ENCODE measurements at regions of chr4 and their contacts with region 1.

Region 1: GRCh38 chr4:140756319-140757231 is at the start of gene TBC1D9:
- DNase-seq: peak; percentile 88
- ATAC-seq: peak; percentile 62
- H3K4me3 ChIP-seq: peak within 1 kb of the TSS; percentile 66 to 99 (median 87)
- H3K4me3 Mint-ChIP-seq: peak within 1 kb of the TSS; percentile 97
- H3K27ac ChIP-seq: peak within 1 kb of the TSS; percentile 99
- H3K27ac Mint-ChIP-seq: peak within 1 kb of the TSS; percentile 98
- H3K4me1 ChIP-seq: peaks cover 45 to 56% of the 10 kb centered on the region in 2 donors
- H3K4me1 Mint-ChIP-seq: peaks cover 63% of the 10 kb centered on the region
- H3K27me3 ChIP-seq: no peaks in the 10 kb centered on the region
- H3K27me3 Mint-ChIP-seq: no peaks in the 10 kb centered on the region
- CTCF ChIP-seq: peak; percentile 1
- total RNA-seq, gene TBC1D9: 235 and 252 TPM in 2 replicates

Region 2: DNA sequence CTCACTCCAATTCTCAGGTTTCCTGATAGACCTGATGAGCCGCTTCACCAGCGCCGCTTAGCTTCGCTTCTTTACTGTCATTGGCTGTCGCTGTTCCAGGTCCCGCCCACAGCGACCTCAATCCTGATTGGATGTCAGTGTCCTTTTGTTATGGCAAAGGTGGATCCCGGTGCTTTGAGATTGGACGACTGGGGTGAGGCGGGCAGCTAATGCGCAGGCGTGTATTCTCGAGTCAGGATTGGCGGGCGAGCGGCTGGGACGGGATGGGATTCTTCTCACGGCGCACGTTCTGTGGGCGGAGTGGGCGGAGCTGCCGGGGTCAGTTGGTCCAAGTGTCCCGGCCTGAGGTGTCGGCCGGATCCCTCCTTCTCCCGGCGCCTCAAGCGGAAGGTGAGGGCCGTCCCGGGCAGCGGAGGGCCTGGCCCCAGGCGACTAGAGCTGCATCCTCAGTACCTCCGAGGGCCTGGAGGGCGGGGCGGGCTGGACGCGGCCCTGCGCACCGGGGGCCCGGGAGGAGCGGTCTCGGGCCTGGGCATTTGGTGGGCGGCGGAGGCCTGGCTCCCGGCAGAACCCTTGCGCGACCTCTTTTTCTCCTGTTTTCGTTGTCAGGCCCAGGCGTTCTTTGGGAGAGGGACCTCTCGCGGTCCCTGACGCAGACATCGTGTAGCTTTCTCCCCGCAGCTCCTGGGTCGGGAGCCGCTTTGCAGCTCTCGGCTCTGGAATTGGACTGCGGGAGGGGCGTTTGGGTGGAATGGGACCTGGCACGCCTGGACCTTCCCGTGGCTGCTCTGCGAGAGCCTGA is 383.0 kb before region 1 on chr4 and contains the start of gene SCOC:
- CTCF ChIA-PET with region 1: no interaction called
- POLR2A ChIA-PET with region 1: no interaction called
- intact Hi-C with region 1: loop called (anchors 10 kb)
- DNase-seq: peak; percentile 97
- ATAC-seq: peak; percentile 95
- H3K4me3 ChIP-seq: peak within 1 kb of the TSS; percentile 54 to 98 (median 93)
- H3K4me3 Mint-ChIP-seq: peak within 1 kb of the TSS; percentile 86
- H3K27ac ChIP-seq: peak within 1 kb of the TSS; percentile 74 to 86
- H3K27ac Mint-ChIP-seq: peak within 1 kb of the TSS; percentile 64
- H3K4me1 ChIP-seq: peaks cover 14 to 16% of the 10 kb centered on the region in 2 donors
- H3K4me1 Mint-ChIP-seq: peaks cover 25% of the 10 kb centered on the region
- H3K27me3 ChIP-seq: no peaks in the 10 kb centered on the region
- H3K27me3 Mint-ChIP-seq: no peaks in the 10 kb centered on the region
- CTCF ChIP-seq: no peak
- total RNA-seq, gene SCOC: 18.4 and 19.2 TPM in 2 replicates

Region 3: DNA sequence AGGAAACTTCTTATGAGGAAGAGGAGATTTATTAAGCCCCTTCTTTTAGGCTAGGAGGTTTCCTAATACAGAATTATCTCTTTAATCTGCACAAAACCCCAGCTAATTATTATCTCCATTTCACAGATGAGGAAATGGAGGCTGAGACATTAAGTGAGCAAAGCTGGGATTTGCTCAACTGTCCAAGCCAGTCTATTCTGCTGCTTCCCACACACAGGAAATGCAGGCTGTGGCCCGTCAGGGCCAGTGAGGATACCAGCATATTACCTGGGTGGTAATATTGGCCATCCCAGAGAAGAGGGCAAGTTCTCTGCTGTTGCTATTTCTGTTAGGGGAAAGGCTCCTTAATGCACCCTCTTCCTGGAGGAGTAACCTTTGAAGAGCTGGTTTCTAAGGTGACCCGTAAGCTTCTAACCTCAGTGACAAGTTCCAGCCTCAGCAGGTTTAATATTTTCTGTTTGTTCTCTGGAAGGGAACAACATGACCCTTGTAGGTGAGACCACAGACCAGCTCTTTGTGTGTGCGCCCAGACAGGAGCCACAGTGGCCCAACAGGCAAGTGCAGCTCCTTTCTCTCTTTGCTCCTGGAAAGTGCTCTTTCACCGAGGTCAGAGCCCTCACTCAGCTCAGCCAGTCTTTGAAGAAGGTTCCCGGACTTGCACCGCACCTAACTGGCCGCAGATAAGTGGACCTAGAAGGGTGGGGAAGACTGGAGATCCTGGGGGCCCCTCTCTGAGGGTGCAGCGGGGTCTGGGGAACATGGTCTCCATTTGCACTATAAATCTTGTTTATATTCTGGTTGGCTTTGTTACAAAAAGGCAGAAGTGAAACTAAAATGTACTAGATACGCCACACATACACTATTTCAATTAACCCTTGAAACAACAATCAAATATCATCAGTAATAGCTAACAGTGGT is 35.9 kb before region 1 on chr4:
- CTCF ChIA-PET with region 1: interaction called, 7 read pairs
- POLR2A ChIA-PET with region 1: interaction called, 20 read pairs
- intact Hi-C with region 1: loop called (anchors 1 kb)
- DNase-seq: peak; percentile 75
- ATAC-seq: peak; percentile 63
- H3K4me3 ChIP-seq: peak overlapping the region; percentile 40 to 68 (median 54)
- H3K4me3 Mint-ChIP-seq: peak overlapping the region; percentile 89
- H3K27ac ChIP-seq: peak overlapping the region; percentile 92
- H3K27ac Mint-ChIP-seq: peak overlapping the region; percentile 99
- H3K4me1 ChIP-seq: peaks cover 75 to 76% of the 10 kb centered on the region in 2 donors
- H3K4me1 Mint-ChIP-seq: peaks cover 85% of the 10 kb centered on the region
- H3K27me3 ChIP-seq: no peaks in the 10 kb centered on the region
- H3K27me3 Mint-ChIP-seq: no peaks in the 10 kb centered on the region
- CTCF ChIP-seq: no peak

Region 4: GRCh38 chr4:140790765-140791164 is 34.2 kb after region 1 on chr4:
- CTCF ChIA-PET with region 1: interaction called, 26 read pairs
- POLR2A ChIA-PET with region 1: interaction called, 29 read pairs
- intact Hi-C with region 1: loop called (anchors 1 kb)
- DNase-seq: peak; percentile 93
- ATAC-seq: peak; percentile 92
- H3K4me3 ChIP-seq: peak overlapping the region in 1 of 5 experiments; percentile 31
- H3K4me3 Mint-ChIP-seq: peak overlapping the region; percentile 67
- H3K27ac ChIP-seq: peak overlapping the region; percentile 72 to 82
- H3K27ac Mint-ChIP-seq: peak overlapping the region; percentile 88
- H3K4me1 ChIP-seq: peaks cover 63 to 67% of the 10 kb centered on the region in 2 donors
- H3K4me1 Mint-ChIP-seq: peaks cover 69% of the 10 kb centered on the region
- H3K27me3 ChIP-seq: no peaks in the 10 kb centered on the region
- H3K27me3 Mint-ChIP-seq: no peaks in the 10 kb centered on the region
- CTCF ChIP-seq: no peak

Region 5: DNA sequence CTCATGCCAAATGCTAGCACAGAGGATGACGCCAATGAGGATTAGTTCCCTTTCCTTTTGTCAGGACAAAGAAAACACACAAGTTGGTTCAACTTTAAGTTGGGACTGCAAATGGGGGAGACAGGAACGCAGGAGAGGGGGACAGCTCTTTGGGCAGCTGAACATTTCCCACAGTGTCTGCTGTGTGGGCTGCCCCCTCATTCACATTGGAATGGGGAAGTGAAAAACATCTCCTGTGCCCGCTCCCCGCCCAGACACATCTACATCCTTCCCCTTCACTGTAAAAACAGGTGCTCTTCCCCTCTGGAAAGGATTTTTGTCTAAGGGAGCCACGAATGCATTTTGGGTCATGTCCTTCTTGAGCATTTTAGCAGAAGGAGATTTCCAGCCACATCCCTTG is 44.1 kb after region 1 on chr4:
- CTCF ChIA-PET with region 1: interaction called, 30 read pairs
- POLR2A ChIA-PET with region 1: interaction called, 15 read pairs
- intact Hi-C with region 1: no loop called
- DNase-seq: peak; percentile 69
- ATAC-seq: peak; percentile 77
- H3K4me3 ChIP-seq: peak overlapping the region in 1 of 5 experiments; percentile 1
- H3K4me3 Mint-ChIP-seq: peak overlapping the region; percentile 73
- H3K27ac ChIP-seq: peak overlapping the region; percentile 52 to 60
- H3K27ac Mint-ChIP-seq: peak overlapping the region; percentile 81
- H3K4me1 ChIP-seq: peaks cover 71 to 82% of the 10 kb centered on the region in 2 donors
- H3K4me1 Mint-ChIP-seq: peaks cover 85% of the 10 kb centered on the region
- H3K27me3 ChIP-seq: no peaks in the 10 kb centered on the region
- H3K27me3 Mint-ChIP-seq: no peaks in the 10 kb centered on the region
- CTCF ChIP-seq: no peak

Region 6: GRCh38 chr4:140807491-140808252 is 51.1 kb after region 1 on chr4:
- CTCF ChIA-PET with region 1: interaction called, 30 read pairs
- POLR2A ChIA-PET with region 1: interaction called, 29 read pairs
- intact Hi-C with region 1: loop called (anchors 1 kb)
- DNase-seq: peak; percentile 80
- ATAC-seq: peak; percentile 84
- H3K4me3 ChIP-seq: peak overlapping the region in 2 of 5 experiments; percentile 10 to 50
- H3K4me3 Mint-ChIP-seq: peak overlapping the region; percentile 70
- H3K27ac ChIP-seq: peak overlapping the region; percentile 82 to 83
- H3K27ac Mint-ChIP-seq: peak overlapping the region; percentile 97
- H3K4me1 ChIP-seq: peaks cover 85 to 92% of the 10 kb centered on the region in 2 donors
- H3K4me1 Mint-ChIP-seq: peaks cover 83% of the 10 kb centered on the region
- H3K27me3 ChIP-seq: no peaks in the 10 kb centered on the region
- H3K27me3 Mint-ChIP-seq: no peaks in the 10 kb centered on the region
- CTCF ChIP-seq: no peak

Region 7: DNA sequence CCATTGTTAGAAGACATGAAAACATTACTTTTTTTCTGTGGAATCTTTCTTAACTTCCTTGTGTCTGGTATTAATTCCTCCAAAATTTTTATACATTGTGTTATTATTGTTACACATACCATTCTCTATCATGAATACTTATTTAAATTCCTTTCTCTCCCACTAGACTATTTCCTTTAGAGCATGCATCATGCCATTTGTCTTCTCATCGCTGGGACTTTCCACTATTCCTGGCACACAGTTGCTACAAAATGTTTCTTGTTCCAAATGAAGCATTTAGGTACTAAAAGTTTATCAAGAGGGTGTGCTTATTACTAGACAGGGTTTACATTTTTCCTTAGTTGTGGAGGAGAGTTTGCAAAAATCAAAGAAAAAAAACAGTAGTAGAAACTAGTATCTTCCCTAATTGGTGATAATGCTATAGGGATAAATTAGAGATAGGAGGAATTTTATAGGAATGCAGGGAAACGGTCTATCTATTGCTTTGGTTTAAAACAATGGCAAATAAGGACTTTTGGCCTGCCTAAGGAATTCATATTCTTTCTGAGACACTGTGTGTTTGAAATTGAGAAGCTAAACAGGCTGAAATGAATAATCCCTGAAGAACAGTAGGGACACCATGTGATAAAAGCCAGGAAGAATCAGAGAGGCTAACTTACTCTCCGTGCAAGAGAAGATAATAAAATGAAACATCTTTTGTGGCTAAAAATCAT is 187.1 kb after region 1 on chr4:
- CTCF ChIA-PET with region 1: no interaction called
- POLR2A ChIA-PET with region 1: no interaction called
- intact Hi-C with region 1: no loop called
- DNase-seq: no peak
- ATAC-seq: no peak
- H3K4me3 ChIP-seq: no peak overlapping the region
- H3K4me3 Mint-ChIP-seq: no peak overlapping the region
- H3K27ac ChIP-seq: no peak overlapping the region
- H3K27ac Mint-ChIP-seq: no peak overlapping the region
- H3K4me1 ChIP-seq: no peaks in the 10 kb centered on the region
- H3K4me1 Mint-ChIP-seq: no peaks in the 10 kb centered on the region
- H3K27me3 ChIP-seq: peaks cover 0 to 4% (median 0%) of the 10 kb centered on the region in 4 experiments
- H3K27me3 Mint-ChIP-seq: peaks cover 9% of the 10 kb centered on the region
- CTCF ChIP-seq: no peak